Activated naive CD4-positive, alpha-beta T cell treated with anti-CD3 and anti-CD28 coated beads, Interleukin-2, amount 10 ng/mL, durations not matched to agents 7 days and 5 days (primary cell): ENCODE measurements at regions of chr14 and their contacts with region 1.

Region 1: GRCh38 chr14:21498553-21499526 is 12.3 kb downstream of the METTL3 start:
- DNase-seq: peak; percentile 33
- H3K4me3 Mint-ChIP-seq: no peak overlapping the region
- H3K27ac Mint-ChIP-seq: peak overlapping the region; percentile 12
- H3K4me1 Mint-ChIP-seq: peaks cover 24% of the 10 kb centered on the region
- H3K27me3 Mint-ChIP-seq: no peaks in the 10 kb centered on the region

Region 2: GRCh38 chr14:21383848-21384493 is 114.9 kb before region 1 on chr14 and contains the start of gene SUPT16H:
- CTCF ChIA-PET with region 1: no interaction called
- DNase-seq: peak; percentile 97
- H3K4me3 Mint-ChIP-seq: peak within 1 kb of the TSS; percentile 91
- H3K27ac Mint-ChIP-seq: peak within 1 kb of the TSS; percentile 98
- H3K4me1 Mint-ChIP-seq: peaks cover 47% of the 10 kb centered on the region
- H3K27me3 Mint-ChIP-seq: no peaks in the 10 kb centered on the region

Region 3: DNA sequence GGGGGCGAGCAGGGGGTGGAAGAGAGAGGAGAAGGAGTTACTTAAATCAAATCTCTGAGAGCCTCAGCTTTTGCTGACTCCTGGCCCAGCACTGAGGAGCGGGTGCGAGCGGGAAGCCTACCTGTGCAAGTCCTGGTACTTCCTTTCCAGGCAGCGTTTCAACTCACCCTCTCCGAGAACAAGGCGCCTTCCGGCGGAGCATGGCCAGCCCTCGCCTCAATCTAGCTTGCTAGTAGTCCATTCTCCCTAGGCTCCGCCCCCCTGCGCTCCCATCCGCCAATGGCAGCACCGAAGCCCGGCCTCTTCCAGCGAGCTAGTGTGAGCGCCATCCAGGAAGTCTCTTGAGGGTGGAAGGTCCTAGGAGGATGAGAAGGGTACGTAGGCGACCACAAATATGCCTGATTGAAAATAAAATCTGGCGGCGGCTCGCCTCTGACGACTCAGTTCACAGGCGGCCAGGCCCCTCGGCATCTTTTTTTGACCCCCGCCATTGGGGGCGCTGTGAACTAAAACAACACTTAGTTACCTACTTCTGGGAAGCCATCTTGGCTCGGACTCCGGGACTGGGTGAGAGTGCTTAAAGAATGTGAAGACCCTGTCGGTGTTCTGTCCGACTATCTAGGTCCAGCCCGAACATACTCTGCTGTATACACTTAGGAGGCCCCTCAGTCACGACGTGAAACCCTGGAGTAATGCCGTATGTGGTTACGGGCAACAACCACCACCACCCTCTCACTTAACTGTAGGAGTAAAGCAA is 42.8 kb before region 1 on chr14 and contains the start of gene CHD8:
- CTCF ChIA-PET with region 1: interaction called, 10 read pairs
- DNase-seq: peak; percentile 100
- H3K4me3 Mint-ChIP-seq: peak within 1 kb of the TSS; percentile 93
- H3K27ac Mint-ChIP-seq: peak within 1 kb of the TSS; percentile 99
- H3K4me1 Mint-ChIP-seq: peaks cover 37% of the 10 kb centered on the region
- H3K27me3 Mint-ChIP-seq: no peaks in the 10 kb centered on the region

Region 4: DNA sequence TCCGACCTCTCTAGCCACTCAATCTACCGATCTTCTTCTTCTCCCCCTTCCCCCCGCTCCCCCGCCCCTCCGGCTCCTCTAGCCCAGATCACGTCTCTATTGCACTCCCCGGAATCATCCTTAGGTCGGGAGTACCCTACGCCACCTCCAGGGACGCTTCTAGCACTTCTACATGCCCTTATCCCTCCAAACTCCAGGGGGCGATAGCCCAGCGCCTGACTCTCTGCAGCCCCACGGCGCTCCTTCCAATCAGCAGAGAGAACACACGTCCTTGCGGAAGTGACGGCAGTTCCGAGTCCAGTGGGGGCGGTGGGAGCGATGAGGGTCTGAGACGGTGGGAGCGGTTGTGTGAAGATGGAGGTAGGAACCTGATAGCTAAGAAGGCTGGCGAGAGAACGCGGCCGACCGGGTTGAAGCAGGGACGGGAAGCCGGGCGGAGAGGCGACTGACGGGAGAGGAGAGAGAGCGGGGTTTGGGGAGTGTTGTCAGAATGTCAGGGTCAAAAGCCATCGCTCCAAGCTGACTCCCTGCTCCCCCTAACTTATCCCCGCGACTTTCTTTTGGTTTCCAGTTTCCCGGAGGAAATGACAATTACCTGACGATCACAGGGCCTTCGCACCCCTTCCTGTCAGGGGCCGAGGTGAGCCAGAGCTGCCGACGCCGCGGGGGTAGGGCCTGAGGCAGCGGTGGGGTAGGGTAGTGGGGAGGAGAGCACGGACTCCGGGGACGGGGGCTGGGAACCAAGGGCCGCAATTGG is 21.7 kb before region 1 on chr14 and contains the starts of genes RAB2B and TOX4:
- CTCF ChIA-PET with region 1: interaction called, 16 read pairs
- DNase-seq: peak; percentile 97
- H3K4me3 Mint-ChIP-seq: peak within 1 kb of the TSS; percentile 99
- H3K27ac Mint-ChIP-seq: peak within 1 kb of the TSS; percentile 98
- H3K4me1 Mint-ChIP-seq: peaks cover 40% of the 10 kb centered on the region
- H3K27me3 Mint-ChIP-seq: no peaks in the 10 kb centered on the region

Region 5: GRCh38 chr14:21510735-21511657 is 12.2 kb after region 1 on chr14 and contains the start of gene METTL3:
- CTCF ChIA-PET with region 1: interaction called, 17 read pairs
- DNase-seq: peak; percentile 97
- H3K4me3 Mint-ChIP-seq: peak within 1 kb of the TSS; percentile 97
- H3K27ac Mint-ChIP-seq: peak within 1 kb of the TSS; percentile 97
- H3K4me1 Mint-ChIP-seq: peaks cover 43% of the 10 kb centered on the region
- H3K27me3 Mint-ChIP-seq: peaks cover 19% of the 10 kb centered on the region

Region 6: DNA sequence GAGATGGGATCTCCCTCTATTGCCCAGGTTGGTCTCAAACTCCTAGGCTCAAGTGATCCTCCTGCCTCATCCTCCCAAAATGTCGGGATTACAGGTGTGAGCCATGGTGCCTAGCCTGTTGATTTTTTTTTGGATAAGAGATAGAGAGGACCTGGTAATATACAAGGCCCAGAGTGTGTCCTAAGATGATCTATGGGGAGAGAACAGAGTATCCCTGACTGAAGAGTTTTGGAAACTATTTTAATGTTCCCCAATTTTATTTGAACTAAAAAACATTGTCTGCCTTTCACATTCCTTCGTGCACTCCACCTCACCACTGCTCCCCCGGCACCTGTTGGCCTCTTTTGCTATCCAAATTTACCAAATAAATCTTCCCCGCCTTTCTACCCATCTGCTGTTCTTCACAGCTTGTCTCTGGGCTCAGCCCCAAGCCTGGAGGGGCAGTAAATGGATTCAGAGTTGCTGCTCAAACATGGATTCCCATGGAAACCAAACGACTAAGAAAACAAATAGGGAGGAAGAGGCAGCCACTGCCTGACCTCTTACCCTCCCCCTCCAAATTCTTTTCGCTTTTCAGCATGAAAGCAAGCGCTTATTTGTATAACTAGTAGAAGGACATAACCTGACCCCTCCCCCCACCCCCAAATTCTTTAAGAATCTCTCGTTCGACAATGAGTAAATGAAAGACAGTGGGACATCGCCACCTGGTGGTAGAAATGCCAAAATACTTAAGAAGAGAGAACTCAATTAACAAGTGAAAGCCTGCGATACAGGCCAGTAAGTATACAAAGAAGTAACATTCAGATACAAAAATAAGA is 58.5 kb after region 1 on chr14:
- CTCF ChIA-PET with region 1: interaction called, 66 read pairs
- DNase-seq: peak; percentile 84
- H3K4me3 Mint-ChIP-seq: no peak overlapping the region
- H3K27ac Mint-ChIP-seq: no peak overlapping the region
- H3K4me1 Mint-ChIP-seq: peaks cover 7% of the 10 kb centered on the region
- H3K27me3 Mint-ChIP-seq: peaks cover 8% of the 10 kb centered on the region

Region 7: GRCh38 chr14:21699551-21699950 is 200.7 kb after region 1 on chr14:
- CTCF ChIA-PET with region 1: no interaction called
- DNase-seq: no peak
- H3K4me3 Mint-ChIP-seq: no peak overlapping the region
- H3K27ac Mint-ChIP-seq: no peak overlapping the region
- H3K4me1 Mint-ChIP-seq: peaks cover 9% of the 10 kb centered on the region
- H3K27me3 Mint-ChIP-seq: peaks cover 14% of the 10 kb centered on the region